Heart left ventricle (tissue), 16 donors: ENCODE measurements at regions of chr9 and their contacts with region 1.

Region 1: DNA sequence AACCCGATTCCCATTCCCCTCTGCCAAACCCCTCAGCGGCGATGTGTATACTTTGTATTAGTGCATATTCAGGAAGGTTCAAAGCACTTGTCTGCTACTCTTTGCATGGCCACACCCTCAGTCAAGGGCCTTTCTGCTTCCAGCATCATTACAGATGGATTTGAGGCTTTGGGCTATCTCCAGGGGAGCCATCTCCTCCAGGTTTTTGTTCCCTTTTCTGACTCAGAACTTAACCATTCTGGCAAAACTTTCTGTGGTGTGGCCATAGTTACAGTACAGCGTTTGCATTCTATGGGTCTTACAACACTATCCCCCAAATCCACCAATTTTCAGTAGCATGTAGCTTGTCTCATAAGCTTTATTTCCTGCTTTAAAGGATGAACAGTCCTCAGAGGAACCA is 36.0 kb upstream of the SVEP1 start:
- DNase-seq: no peak
- ATAC-seq: no peak
- H3K4me3 ChIP-seq: no peak overlapping the region
- H3K27ac ChIP-seq: no peak overlapping the region
- H3K4me1 ChIP-seq: peaks cover 0 to 4% (median 0%) of the 10 kb centered on the region in 12 donors
- H3K27me3 ChIP-seq: no peaks in the 10 kb centered on the region
- CTCF ChIP-seq: no peak
- POLR2A ChIP-seq: no peak

Region 2: GRCh38 chr9:110476251-110476650 is 139.2 kb before region 1 on chr9:
- intact Hi-C with region 1: loop called in 1 of 10 experiments (anchors 10 kb)
- DNase-seq: no peak
- ATAC-seq: no peak
- H3K4me3 ChIP-seq: no peak overlapping the region
- H3K27ac ChIP-seq: no peak overlapping the region
- H3K4me1 ChIP-seq: no peaks in the 10 kb centered on the region
- H3K27me3 ChIP-seq: no peaks in the 10 kb centered on the region
- CTCF ChIP-seq: no peak
- POLR2A ChIP-seq: no peak